Activated T-helper 2 cell treated with anti-CD3 and anti-CD28 coated beads, Interferon-gamma antibody, Interleukin-2, Interleukin-4, amounts not matched to agents 10 μg/mL and 5 μg/mL and 100 μg/mL, durations not matched to agents 14 hours and 24 hours and 36 hours (primary cell): ENCODE measurements at regions of chr1 and their contacts with region 1.

Region 1: GRCh38 chr1:51616901-51617708 is at the start of gene OSBPL9:
- DNase-seq: peak; percentile 80
- H3K4me3 Mint-ChIP-seq: peak within 1 kb of the TSS; percentile 99
- H3K27ac Mint-ChIP-seq: peak within 1 kb of the TSS; percentile 97
- H3K4me1 Mint-ChIP-seq: peaks cover 26% of the 10 kb centered on the region
- H3K27me3 Mint-ChIP-seq: peaks cover 6% of the 10 kb centered on the region
- total RNA-seq, gene OSBPL9: 49.3 and 52.3 TPM in 2 replicates

Region 2: DNA sequence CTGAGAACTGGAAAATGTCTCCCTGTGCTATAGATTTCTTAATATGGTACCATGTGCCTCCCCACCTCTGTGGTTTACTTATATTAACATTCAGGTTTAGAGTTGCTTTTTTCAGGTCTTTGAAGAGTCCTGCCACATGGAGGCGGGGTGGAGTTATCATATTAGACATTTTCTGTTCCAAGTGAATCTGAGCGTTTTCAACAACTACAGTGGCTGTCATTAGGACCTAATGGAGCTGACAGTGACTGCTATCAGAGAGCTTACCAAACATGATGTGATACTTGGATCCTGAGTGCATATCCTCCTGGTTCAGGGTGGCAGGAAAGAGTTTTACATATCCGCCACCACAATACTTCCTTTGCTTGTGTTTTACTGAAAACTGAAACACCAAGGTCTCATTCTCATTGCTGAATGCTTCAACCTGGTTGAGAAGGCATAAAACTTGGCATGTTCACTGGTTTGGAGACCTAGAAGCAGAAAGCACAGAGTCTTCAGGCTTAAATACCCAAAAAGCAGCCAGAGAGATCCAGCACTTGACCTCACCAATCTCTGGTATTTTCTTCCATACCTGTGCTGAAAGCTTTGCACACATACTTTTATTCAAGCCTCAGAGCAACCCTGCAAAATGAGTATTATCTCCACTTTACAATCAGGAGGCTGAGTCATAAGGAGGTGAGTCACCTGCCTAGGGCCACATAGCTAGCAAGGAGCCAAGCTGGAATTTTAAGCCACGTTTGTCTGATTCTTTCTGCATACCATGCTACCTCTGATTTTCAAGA is 47.6 kb before region 1 on chr1:
- intact Hi-C with region 1: loop called (anchors 5 kb)
- DNase-seq: peak; percentile 22
- H3K4me3 Mint-ChIP-seq: peak overlapping the region; percentile 3
- H3K27ac Mint-ChIP-seq: peak overlapping the region; percentile 72
- H3K4me1 Mint-ChIP-seq: peaks cover 34% of the 10 kb centered on the region
- H3K27me3 Mint-ChIP-seq: no peaks in the 10 kb centered on the region

Region 3: GRCh38 chr1:51729156-51729823 is 112.2 kb after region 1 on chr1:
- intact Hi-C with region 1: loop called (anchors 2 kb)
- DNase-seq: peak; percentile 93
- H3K4me3 Mint-ChIP-seq: peak overlapping the region; percentile 89
- H3K27ac Mint-ChIP-seq: peak overlapping the region; percentile 85
- H3K4me1 Mint-ChIP-seq: peaks cover 23% of the 10 kb centered on the region
- H3K27me3 Mint-ChIP-seq: no peaks in the 10 kb centered on the region

Region 4: DNA sequence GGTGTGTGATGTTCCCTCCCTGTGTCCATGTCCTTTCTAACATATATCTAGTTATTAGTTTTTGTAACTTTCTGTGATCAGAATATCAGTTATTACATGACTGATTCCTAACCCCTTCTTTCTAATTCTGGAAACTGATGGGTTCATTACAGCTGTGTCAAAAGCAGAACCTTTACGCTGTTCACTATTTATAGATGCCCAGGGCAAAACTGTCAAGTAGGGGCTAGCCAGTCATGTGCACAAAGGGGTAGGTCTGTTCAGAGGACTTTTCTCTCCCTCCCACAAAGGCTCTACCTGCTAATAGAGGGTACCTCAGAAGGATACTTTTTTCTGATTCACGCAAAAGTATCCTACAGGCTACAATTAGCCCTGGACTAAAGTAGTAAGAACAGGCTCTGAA is 182.3 kb after region 1 on chr1:
- intact Hi-C with region 1: no loop called
- DNase-seq: no peak
- H3K4me3 Mint-ChIP-seq: no peak overlapping the region
- H3K27ac Mint-ChIP-seq: no peak overlapping the region
- H3K4me1 Mint-ChIP-seq: no peaks in the 10 kb centered on the region
- H3K27me3 Mint-ChIP-seq: no peaks in the 10 kb centered on the region